MCF 10A (cell line): ENCODE measurements at regions of chr12 and their contacts with region 1.

Region 1: GRCh38 chr12:89019408-89020120 is 332.7 kb downstream of the DUSP6 start:
- DNase-seq: peak; percentile 90
- H3K4me3 Mint-ChIP-seq: no peak overlapping the region
- H3K27ac Mint-ChIP-seq: no peak overlapping the region
- H3K4me1 Mint-ChIP-seq: peaks cover 12% of the 10 kb centered on the region
- H3K27me3 Mint-ChIP-seq: no peaks in the 10 kb centered on the region
- CTCF ChIP-seq: peak; percentile 81

Region 2: DNA sequence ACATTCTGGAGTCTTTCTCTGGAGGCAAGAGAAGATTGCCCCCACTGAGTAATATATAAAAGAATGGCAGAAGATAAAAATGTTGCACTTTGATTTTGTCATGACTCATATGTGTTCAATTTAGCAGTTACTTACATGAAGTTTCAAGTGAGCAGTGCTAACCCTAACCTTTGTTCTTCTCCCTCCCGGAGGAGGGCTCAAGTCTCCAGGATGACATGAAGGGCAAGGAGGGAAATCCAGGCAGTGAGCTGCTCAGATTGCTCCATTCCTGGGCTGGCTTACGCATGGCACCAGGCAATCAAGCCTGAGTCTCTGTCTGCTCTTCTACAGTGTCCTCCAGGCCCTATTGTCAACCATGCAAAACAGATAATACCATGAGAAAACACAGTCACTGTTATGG is 10.4 kb after region 1 on chr12:
- CTCF ChIA-PET with region 1: interaction called, 37 read pairs
- POLR2A ChIA-PET with region 1: interaction called, 3 read pairs
- intact Hi-C with region 1: no loop called
- DNase-seq: no peak
- H3K4me3 Mint-ChIP-seq: no peak overlapping the region
- H3K27ac Mint-ChIP-seq: no peak overlapping the region
- H3K4me1 Mint-ChIP-seq: no peaks in the 10 kb centered on the region
- H3K27me3 Mint-ChIP-seq: no peaks in the 10 kb centered on the region
- CTCF ChIP-seq: no peak

Region 3: GRCh38 chr12:89051065-89051677 is 31.6 kb after region 1 on chr12:
- CTCF ChIA-PET with region 1: interaction called, 8 read pairs
- POLR2A ChIA-PET with region 1: no interaction called
- intact Hi-C with region 1: loop called (anchors 1 kb)
- DNase-seq: peak; percentile 80
- H3K4me3 Mint-ChIP-seq: no peak overlapping the region
- H3K27ac Mint-ChIP-seq: no peak overlapping the region
- H3K4me1 Mint-ChIP-seq: no peaks in the 10 kb centered on the region
- H3K27me3 Mint-ChIP-seq: no peaks in the 10 kb centered on the region
- CTCF ChIP-seq: peak; percentile 74

Region 4: DNA sequence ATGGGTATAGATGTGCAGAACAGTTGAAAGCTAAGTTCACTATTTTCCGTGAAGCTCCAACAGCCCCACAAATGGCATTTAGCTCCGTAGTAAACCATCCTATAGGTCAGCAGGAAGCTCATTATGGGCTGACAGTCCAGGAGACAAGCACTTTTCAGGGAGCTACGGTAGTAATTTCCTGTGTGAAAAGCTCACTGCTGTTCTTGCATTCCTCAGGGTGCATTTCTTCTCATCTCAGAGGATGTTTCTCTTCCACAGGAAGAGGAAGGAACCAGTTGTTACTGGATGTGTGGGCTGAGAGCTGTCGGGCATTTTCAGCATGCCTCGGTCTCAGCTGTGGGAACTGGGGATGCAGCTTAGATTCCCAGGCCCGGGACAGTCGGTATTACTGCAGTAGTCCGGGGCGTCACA is 432.3 kb after region 1 on chr12:
- CTCF ChIA-PET with region 1: interaction called, 11 read pairs
- POLR2A ChIA-PET with region 1: no interaction called
- intact Hi-C with region 1: no loop called
- DNase-seq: peak; percentile 21
- H3K4me3 Mint-ChIP-seq: peak overlapping the region; percentile 44
- H3K27ac Mint-ChIP-seq: peak overlapping the region; percentile 16
- H3K4me1 Mint-ChIP-seq: peaks cover 10% of the 10 kb centered on the region
- H3K27me3 Mint-ChIP-seq: no peaks in the 10 kb centered on the region
- CTCF ChIP-seq: no peak

Region 5: DNA sequence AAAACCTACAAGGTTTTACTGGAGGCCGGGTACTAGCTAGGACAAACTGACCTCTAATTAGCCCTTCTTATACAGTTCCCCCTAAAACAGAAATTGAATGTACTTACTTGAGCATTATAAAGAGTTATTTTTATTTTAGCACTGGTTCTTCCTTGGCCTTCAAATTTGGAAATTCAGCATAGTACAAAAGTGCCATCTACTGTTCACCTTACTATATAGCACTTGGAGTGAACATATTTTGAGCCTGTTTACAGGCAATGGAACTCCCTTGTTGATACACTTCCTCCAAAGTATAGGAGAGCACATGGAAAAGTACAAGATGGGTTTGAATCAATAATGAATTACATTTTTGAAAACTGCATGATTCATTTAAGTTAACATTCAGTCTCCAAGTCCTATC is 510.2 kb after region 1 on chr12:
- CTCF ChIA-PET with region 1: interaction called, 52 read pairs
- POLR2A ChIA-PET with region 1: interaction called, 6 read pairs
- intact Hi-C with region 1: loop called (anchors 1 kb)
- DNase-seq: peak; percentile 54
- H3K4me3 Mint-ChIP-seq: no peak overlapping the region
- H3K27ac Mint-ChIP-seq: no peak overlapping the region
- H3K4me1 Mint-ChIP-seq: no peaks in the 10 kb centered on the region
- H3K27me3 Mint-ChIP-seq: no peaks in the 10 kb centered on the region
- CTCF ChIP-seq: peak; percentile 72